IMR-90 (cell line): ENCODE measurements at regions of chr11 and their contacts with region 1.

Region 1: DNA sequence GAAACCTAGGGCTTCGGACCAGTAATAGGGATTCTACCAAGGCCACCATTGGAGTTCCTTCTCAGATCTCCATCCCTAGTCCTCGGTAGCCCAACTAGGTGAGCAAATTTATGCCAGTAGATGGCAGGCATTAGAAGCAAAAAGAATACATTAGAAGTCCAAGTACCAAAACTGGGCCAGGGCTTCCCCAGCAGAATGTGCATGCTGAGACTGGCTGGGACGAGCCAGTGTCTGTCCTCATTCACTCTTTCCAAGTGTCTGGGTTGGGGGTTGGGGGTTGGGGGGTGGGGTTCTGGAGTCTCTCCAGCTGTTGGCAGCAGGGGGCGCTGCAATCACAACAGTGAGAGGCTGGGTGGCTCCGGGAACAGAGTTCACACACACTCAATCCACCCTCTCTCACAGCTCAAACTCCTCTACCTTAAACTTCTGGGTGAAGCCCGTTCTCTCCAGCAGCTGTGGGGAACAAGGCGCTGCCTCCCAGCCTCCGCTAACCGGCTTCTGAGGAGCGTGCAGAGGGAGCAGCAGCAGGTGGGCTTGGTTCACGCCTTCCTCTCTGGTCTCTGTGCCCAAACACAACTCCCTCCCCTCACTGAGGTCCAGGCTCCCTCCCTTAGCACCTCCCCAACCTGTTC is 57.5 kb downstream of the BTG4 start:
- DNase-seq: peak; percentile 73
- ATAC-seq: peak; percentile 90
- H3K4me3 ChIP-seq: no peak overlapping the region
- H3K27ac ChIP-seq: peak overlapping the region; percentile 26
- H3K4me1 ChIP-seq: peaks cover 5% of the 10 kb centered on the region
- H3K27me3 ChIP-seq: peaks cover 2% of the 10 kb centered on the region; the same call in 1 of the 2 replicates
- CTCF ChIP-seq: peak; percentile 56
- POLR2A ChIP-seq: no peak
- RAD21 ChIP-seq: peak; percentile 72

Region 2: GRCh38 chr11:110763249-110764011 is 691.2 kb before region 1 on chr11:
- CTCF ChIA-PET with region 1: no interaction called
- POLR2A ChIA-PET with region 1: no interaction called
- dilution Hi-C with region 1: no loop called
- in situ Hi-C with region 1: no loop called
- intact Hi-C with region 1: no loop called
- DNase-seq: peak; percentile 80
- ATAC-seq: peak; percentile 52
- H3K4me3 ChIP-seq: no peak overlapping the region
- H3K27ac ChIP-seq: peak overlapping the region; percentile 86; the same call in 1 of the 2 replicates
- H3K4me1 ChIP-seq: peaks cover 11% of the 10 kb centered on the region
- H3K27me3 ChIP-seq: no peaks in the 10 kb centered on the region
- CTCF ChIP-seq: no peak
- POLR2A ChIP-seq: no peak
- RAD21 ChIP-seq: no peak

Region 3: GRCh38 chr11:111494040-111494439 is 39.4 kb after region 1 on chr11:
- CTCF ChIA-PET with region 1: no interaction called
- POLR2A ChIA-PET with region 1: no interaction called
- dilution Hi-C with region 1: no loop called
- in situ Hi-C with region 1: no loop called
- intact Hi-C with region 1: no loop called
- DNase-seq: no peak
- ATAC-seq: no peak
- H3K4me3 ChIP-seq: no peak overlapping the region
- H3K27ac ChIP-seq: no peak overlapping the region
- H3K4me1 ChIP-seq: no peaks in the 10 kb centered on the region
- H3K27me3 ChIP-seq: peaks cover 6% of the 10 kb centered on the region
- CTCF ChIP-seq: no peak
- POLR2A ChIP-seq: no peak
- RAD21 ChIP-seq: no peak

Region 4: DNA sequence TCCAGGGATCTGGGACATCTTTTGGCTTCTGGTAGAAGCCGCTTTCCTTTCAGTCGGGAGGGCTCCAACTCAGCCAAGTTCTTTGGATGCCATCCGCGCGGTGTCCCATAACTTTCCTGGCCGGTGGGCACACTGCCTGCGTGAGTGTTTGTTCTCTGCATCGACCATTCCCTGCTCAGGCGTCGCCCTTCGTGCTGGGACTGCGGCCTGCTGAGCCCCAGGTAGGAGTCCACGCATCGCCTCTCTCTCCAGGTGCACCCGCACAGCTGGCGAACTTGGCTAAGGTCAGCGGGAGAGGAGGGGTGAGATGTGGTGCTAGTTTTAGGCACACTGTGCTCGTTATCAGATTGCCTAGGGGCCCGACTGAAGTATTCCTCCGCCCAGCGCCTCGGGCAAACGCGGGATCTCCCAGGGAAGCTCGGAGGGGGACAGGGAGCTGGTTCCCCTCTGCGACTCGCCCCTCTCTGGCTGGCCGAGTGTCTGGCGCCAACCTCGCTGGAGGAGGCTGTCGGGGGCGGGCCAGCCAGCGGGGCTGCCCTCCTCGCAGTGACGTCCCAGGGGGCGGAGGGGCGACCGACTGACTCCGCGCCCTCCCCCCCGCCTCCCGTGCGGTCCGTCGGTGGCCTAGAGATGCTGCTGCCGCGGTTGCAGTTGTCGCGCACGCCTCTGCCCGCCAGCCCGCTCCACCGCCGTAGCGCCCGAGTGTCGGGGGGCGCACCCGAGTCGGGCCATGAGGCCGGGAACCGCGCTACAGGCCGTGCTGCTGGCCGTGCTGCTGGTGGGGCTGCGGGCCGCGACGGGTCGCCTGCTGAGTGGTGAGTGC is 85.6 kb after region 1 on chr11 and contains the start of gene LAYN:
- CTCF ChIA-PET with region 1: no interaction called
- POLR2A ChIA-PET with region 1: no interaction called
- dilution Hi-C with region 1: no loop called
- in situ Hi-C with region 1: no loop called
- intact Hi-C with region 1: loop called (anchors 1 kb)
- DNase-seq: peak; percentile 62
- ATAC-seq: peak; percentile 81
- H3K4me3 ChIP-seq: peak within 1 kb of the TSS; percentile 85
- H3K27ac ChIP-seq: peak within 1 kb of the TSS; percentile 91
- H3K4me1 ChIP-seq: peaks cover 17% of the 10 kb centered on the region
- H3K27me3 ChIP-seq: no peaks in the 10 kb centered on the region
- CTCF ChIP-seq: no peak
- POLR2A ChIP-seq: peak; percentile 79
- RAD21 ChIP-seq: no peak
- total RNA-seq, gene LAYN: 92.5 and 111 TPM in 2 replicates

Region 5: GRCh38 chr11:111557425-111558111 is 102.9 kb after region 1 on chr11:
- CTCF ChIA-PET with region 1: interaction called, 4 read pairs
- POLR2A ChIA-PET with region 1: no interaction called
- dilution Hi-C with region 1: no loop called
- in situ Hi-C with region 1: no loop called
- intact Hi-C with region 1: loop called (anchors 2 kb)
- DNase-seq: peak; percentile 99
- ATAC-seq: peak; percentile 78
- H3K4me3 ChIP-seq: no peak overlapping the region
- H3K27ac ChIP-seq: peak overlapping the region; percentile 100
- H3K4me1 ChIP-seq: peaks cover 47% of the 10 kb centered on the region
- H3K27me3 ChIP-seq: no peaks in the 10 kb centered on the region
- CTCF ChIP-seq: peak; percentile 18; the same call in 1 of the 2 replicates
- POLR2A ChIP-seq: no peak; the same call in 1 of the 2 replicates
- RAD21 ChIP-seq: no peak; the same call in 1 of the 2 replicates

Region 6: GRCh38 chr11:111565114-111565720 is 110.5 kb after region 1 on chr11:
- CTCF ChIA-PET with region 1: interaction called, 3 read pairs
- POLR2A ChIA-PET with region 1: no interaction called
- dilution Hi-C with region 1: no loop called
- in situ Hi-C with region 1: no loop called
- intact Hi-C with region 1: loop called (anchors 2 kb)
- DNase-seq: peak; percentile 80
- ATAC-seq: peak; percentile 11; the same call in 1 of the 2 replicates
- H3K4me3 ChIP-seq: no peak overlapping the region
- H3K27ac ChIP-seq: no peak overlapping the region
- H3K4me1 ChIP-seq: peaks cover 23% of the 10 kb centered on the region
- H3K27me3 ChIP-seq: no peaks in the 10 kb centered on the region
- CTCF ChIP-seq: peak; percentile 92
- POLR2A ChIP-seq: peak; percentile 28; the same call in 1 of the 2 replicates
- RAD21 ChIP-seq: peak; percentile 89